ENCODE measurements at regions of chr2 and their contacts with region 1.

Region 1: GRCh38 chr2:241355983-241356870 is at the start of gene FARP2:
- DNase-seq: peak; percentile 100
- H3K4me3 ChIP-seq: peak within 1 kb of the TSS; percentile 65 to 91 (median 74)
- H3K27ac ChIP-seq: peak within 1 kb of the TSS; percentile 91 to 98 (median 97)
- H3K4me1 ChIP-seq: peaks cover 0 to 29% (median 23%) of the 10 kb centered on the region in 4 donors
- H3K27me3 ChIP-seq: no peaks in the 10 kb centered on the region
- CTCF ChIP-seq: no peak
- EP300 ChIP-seq: no peak
- POLR2A ChIP-seq: no peak
- total RNA-seq, gene FARP2: 19.3 to 32.6 (median 28.1) TPM

Region 2: DNA sequence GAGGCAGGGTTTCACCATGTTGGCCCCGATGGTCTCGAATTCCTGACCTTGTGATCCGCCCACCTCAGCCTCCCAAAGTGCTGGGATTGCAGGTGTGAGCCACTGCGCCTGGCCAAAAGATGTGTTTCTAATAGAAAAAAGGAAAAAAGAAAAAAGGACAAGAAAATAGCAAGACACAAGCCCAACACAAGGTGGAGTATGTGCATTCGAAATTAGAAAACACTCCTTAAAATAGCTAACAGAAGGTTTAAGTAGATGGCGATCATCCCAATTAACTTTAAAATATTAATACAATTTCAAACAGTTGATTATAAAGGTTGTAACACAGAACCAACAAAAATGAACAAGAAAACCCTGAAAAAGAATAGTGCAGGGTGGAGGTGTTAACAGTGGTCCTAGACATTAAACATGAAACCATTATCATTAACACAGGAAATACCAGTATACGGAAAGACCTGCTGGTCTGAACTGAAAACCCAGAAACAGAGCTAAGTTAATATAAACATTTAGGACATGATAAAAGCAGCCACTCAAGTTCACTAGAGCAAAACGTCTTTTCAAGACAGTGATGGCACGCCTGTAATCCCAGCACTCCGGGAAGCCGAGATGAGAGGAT is 98.7 kb before region 1 on chr2:
- intact Hi-C with region 1: no loop called
- DNase-seq: no peak
- H3K4me3 ChIP-seq: no peak overlapping the region
- H3K27ac ChIP-seq: no peak overlapping the region
- H3K4me1 ChIP-seq: peaks cover 0 to 7% (median 0%) of the 10 kb centered on the region in 4 donors
- H3K27me3 ChIP-seq: no peaks in the 10 kb centered on the region
- CTCF ChIP-seq: peak in 1 of 4 experiments; percentile 14
- EP300 ChIP-seq: no peak
- POLR2A ChIP-seq: no peak

Region 3: GRCh38 chr2:241271641-241272297 is 84.5 kb before region 1 on chr2:
- intact Hi-C with region 1: loop called (anchors 2 kb)
- DNase-seq: peak; percentile 93
- H3K4me3 ChIP-seq: peak overlapping the region; percentile 86 to 100 (median 94)
- H3K27ac ChIP-seq: peak overlapping the region; percentile 97 to 99 (median 98)
- H3K4me1 ChIP-seq: peaks cover 0 to 44% (median 31%) of the 10 kb centered on the region in 4 donors
- H3K27me3 ChIP-seq: no peaks in the 10 kb centered on the region
- CTCF ChIP-seq: no peak
- EP300 ChIP-seq: no peak
- POLR2A ChIP-seq: no peak

Region 4: GRCh38 chr2:241399941-241400919 is 44.0 kb after region 1 on chr2:
- intact Hi-C with region 1: no loop called
- DNase-seq: no peak
- H3K4me3 ChIP-seq: no peak overlapping the region
- H3K27ac ChIP-seq: no peak overlapping the region
- H3K4me1 ChIP-seq: no peaks in the 10 kb centered on the region
- H3K27me3 ChIP-seq: no peaks in the 10 kb centered on the region
- CTCF ChIP-seq: no peak
- EP300 ChIP-seq: no peak
- POLR2A ChIP-seq: no peak

Region 5: GRCh38 chr2:241508240-241509154 is 152.3 kb after region 1 on chr2 and contains the start of gene STK25:
- intact Hi-C with region 1: loop called (anchors 5 kb)
- DNase-seq: peak; percentile 99
- H3K4me3 ChIP-seq: peak within 1 kb of the TSS; percentile 65 to 99 (median 76)
- H3K27ac ChIP-seq: peak within 1 kb of the TSS; percentile 82 to 91 (median 90)
- H3K4me1 ChIP-seq: peaks cover 0 to 43% (median 40%) of the 10 kb centered on the region in 4 donors
- H3K27me3 ChIP-seq: no peaks in the 10 kb centered on the region
- CTCF ChIP-seq: peak in 1 of 4 experiments; percentile 2
- EP300 ChIP-seq: peak in 1 of 4 donors; percentile 38
- POLR2A ChIP-seq: peak in 1 of 2 donors; percentile 29
- total RNA-seq, gene STK25: 125 to 266 (median 178) TPM

Region 6: DNA sequence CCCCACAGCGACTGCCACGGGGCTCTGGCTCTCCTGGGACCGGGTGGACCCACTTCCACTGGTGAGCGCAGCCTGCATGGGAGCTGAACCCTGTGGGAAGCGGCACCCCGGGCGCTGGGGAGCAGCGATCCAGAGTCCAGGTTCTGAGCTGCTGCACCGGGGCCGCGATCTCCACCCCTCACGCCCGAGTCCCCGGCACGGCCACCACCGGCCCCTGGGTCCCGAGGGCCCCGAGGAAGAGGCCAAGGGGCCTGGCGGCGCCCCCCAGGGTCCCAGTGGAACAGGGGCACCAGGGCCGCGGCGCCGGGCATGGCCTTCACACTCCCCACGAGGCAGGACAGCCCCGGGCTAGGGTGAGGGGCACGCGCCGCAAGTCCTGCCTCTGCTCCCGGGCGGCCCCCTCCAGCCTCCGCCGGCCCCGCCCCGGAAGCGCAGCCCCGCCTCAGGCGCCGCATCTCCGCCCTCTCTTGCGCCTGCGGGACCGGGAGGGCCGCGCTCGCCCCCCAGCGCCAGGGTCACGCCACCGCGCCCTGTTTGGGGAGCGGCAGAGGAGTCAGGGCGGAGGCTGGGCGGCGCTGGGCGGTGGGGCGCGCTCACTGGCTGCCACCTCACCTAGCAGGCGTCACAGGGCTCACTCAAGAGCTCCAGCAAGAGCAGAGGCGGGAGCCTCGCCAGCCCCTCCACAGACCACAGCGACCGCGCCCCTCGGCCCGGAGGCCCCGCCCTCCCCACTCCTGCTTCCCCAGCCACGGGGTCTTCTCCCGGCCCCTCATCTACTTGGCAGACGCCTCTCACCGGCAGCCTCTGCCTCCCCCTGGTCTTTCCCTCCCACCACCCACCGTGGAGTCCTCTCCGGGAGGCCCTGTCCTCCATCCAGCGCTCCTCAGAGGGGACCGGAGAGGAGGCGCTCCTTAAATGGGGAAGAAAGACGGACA is 253.9 kb after region 1 on chr2:
- intact Hi-C with region 1: loop called (anchors 5 kb)
- DNase-seq: peak; percentile 93
- H3K4me3 ChIP-seq: peak overlapping the region; percentile 45 to 67 (median 66)
- H3K27ac ChIP-seq: peak overlapping the region; percentile 80 to 84 (median 84)
- H3K4me1 ChIP-seq: peaks cover 0 to 26% (median 23%) of the 10 kb centered on the region in 4 donors
- H3K27me3 ChIP-seq: no peaks in the 10 kb centered on the region
- CTCF ChIP-seq: peak in 3 of 4 experiments; percentile 21 to 73 (median 45)
- EP300 ChIP-seq: no peak
- POLR2A ChIP-seq: peak in 1 of 2 donors; percentile 8

Region 7: GRCh38 chr2:241702132-241703031 is 346.2 kb after region 1 on chr2:
- intact Hi-C with region 1: loop called (anchors 10 kb)
- DNase-seq: peak; percentile 94
- H3K4me3 ChIP-seq: peak overlapping the region; percentile 67 to 91 (median 86)
- H3K27ac ChIP-seq: peak overlapping the region; percentile 86 to 95 (median 93)
- H3K4me1 ChIP-seq: peaks cover 0 to 25% (median 18%) of the 10 kb centered on the region in 4 donors
- H3K27me3 ChIP-seq: no peaks in the 10 kb centered on the region
- CTCF ChIP-seq: peak in 1 of 4 experiments; percentile 23
- EP300 ChIP-seq: no peak
- POLR2A ChIP-seq: no peak